GM12878 (cell line): ENCODE measurements at regions of chr3 and their contacts with region 1.

Region 1: DNA sequence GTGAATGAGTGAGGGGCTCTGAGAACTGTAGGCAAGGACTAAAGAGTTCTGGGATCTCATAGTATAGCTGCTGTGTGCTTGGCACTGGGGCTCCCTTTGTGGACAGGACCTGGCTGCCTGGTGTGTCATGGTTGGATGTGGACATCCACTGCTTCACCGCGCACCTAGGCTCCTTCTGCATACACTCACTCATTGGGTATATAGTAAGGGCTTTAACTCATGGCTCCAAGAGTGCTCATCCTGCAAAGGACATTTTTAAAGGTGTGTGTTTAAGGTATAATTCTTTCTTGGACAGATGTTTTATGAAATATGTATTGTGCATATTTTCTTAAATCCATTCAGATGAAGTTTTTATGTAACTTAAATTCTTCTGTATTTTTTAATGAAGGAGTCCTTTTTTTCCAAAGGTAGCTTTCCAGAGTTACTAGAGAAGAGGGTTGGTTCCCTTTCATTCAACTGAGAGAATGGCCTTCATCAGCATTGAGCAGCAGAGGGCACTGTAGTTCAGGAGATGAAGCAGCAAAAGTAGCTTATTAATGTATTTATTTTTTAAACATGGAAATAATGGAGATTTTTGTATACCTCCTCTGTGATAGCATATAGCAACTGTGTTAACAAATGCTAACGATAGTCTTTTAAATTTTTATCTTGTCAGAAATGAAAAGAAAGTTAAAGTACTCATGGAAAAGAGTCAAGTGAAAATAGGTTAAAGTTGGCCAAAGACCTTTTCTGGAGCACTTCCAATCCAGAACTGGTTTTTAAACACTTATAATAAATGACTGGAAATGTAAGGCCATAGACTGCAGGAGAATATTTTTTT is 25.2 kb downstream of the OXNAD1 start:
- DNase-seq: no peak
- ATAC-seq: peak; percentile 58
- H3K4me3 ChIP-seq: no peak overlapping the region
- H3K27ac ChIP-seq: peak overlapping the region; percentile 5; the same call in 1 of the 2 replicates
- H3K4me1 ChIP-seq: peaks cover 11% of the 10 kb centered on the region
- H3K27me3 ChIP-seq: no peaks in the 10 kb centered on the region
- CTCF ChIP-seq: peak; percentile 64 to 89 (median 81)
- EP300 ChIP-seq: no peak
- POLR2A ChIP-seq: no peak
- RAD21 ChIP-seq: peak; percentile 96

Region 2: GRCh38 chr3:16211176-16211904 is 78.9 kb before region 1 on chr3:
- CTCF ChIA-PET with region 1: no interaction called
- POLR2A ChIA-PET with region 1: no interaction called
- RAD21 ChIA-PET with region 1: no interaction called
- SMC1A ChIA-PET with region 1: no interaction called
- in situ Hi-C with region 1: no loop called
- intact Hi-C with region 1: no loop called
- DNase-seq: no peak
- ATAC-seq: no peak
- H3K4me3 ChIP-seq: no peak overlapping the region
- H3K27ac ChIP-seq: no peak overlapping the region
- H3K4me1 ChIP-seq: no peaks in the 10 kb centered on the region
- H3K27me3 ChIP-seq: no peaks in the 10 kb centered on the region; a peak in 1 of 4 replicates
- CTCF ChIP-seq: no peak
- EP300 ChIP-seq: no peak
- POLR2A ChIP-seq: no peak
- RAD21 ChIP-seq: no peak

Region 3: GRCh38 chr3:16300881-16301359 is 10.7 kb after region 1 on chr3:
- CTCF ChIA-PET with region 1: interaction called, 45 read pairs
- POLR2A ChIA-PET with region 1: interaction called, 5 read pairs
- RAD21 ChIA-PET with region 1: interaction called, 26 read pairs
- SMC1A ChIA-PET with region 1: interaction called, 13 read pairs
- in situ Hi-C with region 1: no loop called
- intact Hi-C with region 1: no loop called
- DNase-seq: peak; percentile 48
- ATAC-seq: peak; percentile 75
- H3K4me3 ChIP-seq: no peak overlapping the region
- H3K27ac ChIP-seq: peak overlapping the region; percentile 33
- H3K4me1 ChIP-seq: peaks cover 20% of the 10 kb centered on the region
- H3K27me3 ChIP-seq: no peaks in the 10 kb centered on the region
- CTCF ChIP-seq: no peak
- EP300 ChIP-seq: no peak
- POLR2A ChIP-seq: no peak
- RAD21 ChIP-seq: no peak

Region 4: DNA sequence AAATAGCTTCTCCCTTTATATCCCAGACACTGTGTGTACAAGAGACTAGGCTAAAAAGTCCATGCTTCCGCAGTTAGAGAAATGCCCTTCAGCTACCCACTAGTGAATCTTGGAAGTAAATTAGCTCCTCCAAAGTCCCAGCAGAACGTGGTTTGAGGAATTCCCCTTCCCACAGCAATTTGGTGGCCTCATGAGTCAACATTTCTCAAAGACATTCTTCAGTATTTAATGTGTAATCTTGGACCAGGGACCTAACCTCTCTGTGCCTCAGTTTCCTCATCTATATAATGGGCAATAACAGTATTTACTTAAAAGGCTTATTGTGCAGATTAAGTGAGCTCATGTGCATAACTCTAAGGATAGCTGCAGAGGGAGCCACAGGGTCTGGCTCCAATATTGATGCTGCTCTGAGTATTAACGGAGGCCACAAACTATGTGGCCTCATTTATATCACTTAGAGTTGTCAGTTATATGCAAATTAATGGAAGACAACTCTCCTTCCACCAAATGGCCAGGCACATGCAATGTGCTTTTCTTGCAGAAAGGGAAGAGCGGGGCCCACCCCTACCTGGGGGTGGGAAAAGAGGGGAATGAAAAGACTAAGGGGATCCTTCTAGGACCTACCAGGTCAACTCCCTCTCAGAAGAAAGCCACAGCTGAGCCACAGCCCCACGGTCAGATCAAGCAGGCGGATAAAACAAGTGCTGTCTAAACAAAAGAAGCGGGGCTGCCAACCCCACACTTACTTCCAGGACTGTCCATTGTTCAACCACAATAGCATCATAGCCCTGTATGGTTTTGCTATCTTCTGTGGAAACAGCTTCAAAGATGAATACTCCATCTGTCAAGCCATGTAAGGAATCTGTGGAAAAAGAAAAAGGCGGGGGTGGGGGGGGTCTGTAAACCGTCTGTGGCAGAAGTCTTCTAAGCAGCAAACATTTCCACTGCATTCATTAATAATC is 67.2 kb after region 1 on chr3:
- CTCF ChIA-PET with region 1: interaction called, 11 read pairs
- POLR2A ChIA-PET with region 1: no interaction called
- RAD21 ChIA-PET with region 1: interaction called, 3 read pairs
- SMC1A ChIA-PET with region 1: interaction called, 3 read pairs
- in situ Hi-C with region 1: no loop called
- intact Hi-C with region 1: no loop called
- DNase-seq: no peak
- ATAC-seq: no peak
- H3K4me3 ChIP-seq: no peak overlapping the region
- H3K27ac ChIP-seq: no peak overlapping the region
- H3K4me1 ChIP-seq: peaks cover 9% of the 10 kb centered on the region; the same call in 1 of the 2 replicates
- H3K27me3 ChIP-seq: no peaks in the 10 kb centered on the region
- CTCF ChIP-seq: no peak
- EP300 ChIP-seq: no peak
- POLR2A ChIP-seq: no peak
- RAD21 ChIP-seq: 0 out of 2 replicates have a peak, but pooled peaks have one; percentile 4

Region 5: GRCh38 chr3:16516695-16517481 is 226.7 kb after region 1 on chr3:
- CTCF ChIA-PET with region 1: interaction called, 13 read pairs
- POLR2A ChIA-PET with region 1: interaction called, 3 read pairs
- RAD21 ChIA-PET with region 1: interaction called, 37 read pairs
- SMC1A ChIA-PET with region 1: interaction called, 23 read pairs
- in situ Hi-C with region 1: no loop called
- intact Hi-C with region 1: no loop called
- DNase-seq: no peak
- ATAC-seq: peak; percentile 24
- H3K4me3 ChIP-seq: peak overlapping the region; percentile 86
- H3K27ac ChIP-seq: peak overlapping the region; percentile 92
- H3K4me1 ChIP-seq: peaks cover 52% of the 10 kb centered on the region
- H3K27me3 ChIP-seq: no peaks in the 10 kb centered on the region
- CTCF ChIP-seq: peak in 1 of 3 experiments; percentile 16; a peak in 1 of 6 replicates
- EP300 ChIP-seq: peak; percentile 22 to 25; a peak in 2 of 4 replicates
- POLR2A ChIP-seq: peak; percentile 40; the same call in 1 of the 2 replicates
- RAD21 ChIP-seq: no peak

Region 6: DNA sequence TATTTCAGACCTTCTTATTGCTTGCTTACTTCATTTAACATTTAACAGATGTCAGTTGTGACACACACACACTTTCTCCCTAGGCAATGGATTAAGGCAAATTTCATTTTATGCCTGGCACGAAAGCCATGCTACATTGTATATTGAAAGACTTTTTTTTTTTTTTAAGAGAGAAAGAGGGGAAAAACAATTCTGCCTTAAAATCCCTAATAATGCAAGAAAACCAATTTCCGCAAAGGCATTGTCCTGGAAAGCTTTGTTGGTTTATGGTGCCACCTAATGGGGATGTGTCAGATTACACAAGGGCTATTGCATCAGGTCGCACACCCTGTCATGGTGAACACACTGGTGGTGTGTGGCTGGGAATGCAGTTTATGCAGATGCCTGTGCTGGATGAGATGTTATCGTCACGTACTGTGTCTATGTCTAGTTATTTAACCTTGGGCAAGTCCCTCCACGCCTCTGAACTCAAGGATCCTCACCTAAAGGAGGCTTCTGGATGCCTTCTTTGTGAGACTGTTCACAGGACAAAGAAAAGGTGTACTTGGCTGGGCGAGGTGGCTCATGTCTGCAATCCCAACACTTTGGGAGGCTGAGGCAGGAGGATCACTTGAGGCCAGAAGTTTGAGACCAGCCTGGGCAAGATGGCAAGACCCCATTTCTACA is 260.6 kb after region 1 on chr3:
- CTCF ChIA-PET with region 1: interaction called, 170 read pairs
- POLR2A ChIA-PET with region 1: interaction called, 4 read pairs
- RAD21 ChIA-PET with region 1: interaction called, 91 read pairs
- SMC1A ChIA-PET with region 1: interaction called, 67 read pairs
- in situ Hi-C with region 1: loop called (anchors 5 kb)
- intact Hi-C with region 1: loop called (anchors 1 kb)
- DNase-seq: peak; percentile 81
- ATAC-seq: peak; percentile 98
- H3K4me3 ChIP-seq: no peak overlapping the region
- H3K27ac ChIP-seq: 0 out of 2 replicates have a peak overlapping the region, but pooled peaks have one; percentile 9
- H3K4me1 ChIP-seq: peaks cover 13% of the 10 kb centered on the region
- H3K27me3 ChIP-seq: no peaks in the 10 kb centered on the region
- CTCF ChIP-seq: peak; percentile 83 to 94 (median 90)
- EP300 ChIP-seq: no peak
- POLR2A ChIP-seq: peak; percentile 25; the same call in 1 of the 2 replicates
- RAD21 ChIP-seq: peak; percentile 100

Region 7: DNA sequence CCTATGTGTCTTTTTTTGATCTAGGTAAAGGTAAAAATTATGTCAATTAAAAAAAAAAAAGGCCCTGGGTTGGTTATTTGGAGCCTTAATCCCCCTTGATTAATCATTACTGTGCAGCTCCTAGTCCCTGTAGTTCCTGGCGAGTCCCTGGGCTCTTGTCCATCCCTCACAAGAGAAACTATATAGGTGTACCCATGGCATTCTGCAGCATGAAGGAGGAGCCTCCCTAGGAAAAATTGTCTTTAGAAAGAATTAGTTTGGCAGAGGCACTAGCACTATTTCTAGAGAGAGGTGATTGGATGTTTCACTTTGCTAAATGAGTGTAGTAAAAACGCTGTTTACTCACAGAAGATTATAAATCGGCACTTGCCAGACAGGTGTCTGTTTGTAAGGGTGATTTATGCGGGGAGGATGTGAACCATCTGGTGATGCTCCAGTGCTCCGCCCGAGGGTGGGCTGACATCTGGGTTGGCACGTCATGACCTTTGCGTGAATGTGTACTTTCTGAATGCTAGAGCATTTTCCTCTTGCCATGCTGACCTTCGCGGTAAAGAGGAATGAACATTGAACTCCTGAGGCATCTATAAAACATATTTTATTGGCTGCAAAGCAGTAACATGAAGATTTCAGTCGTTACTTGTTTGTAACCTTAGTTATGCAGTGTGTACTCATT is 607.2 kb after region 1 on chr3:
- CTCF ChIA-PET with region 1: no interaction called
- POLR2A ChIA-PET with region 1: no interaction called
- RAD21 ChIA-PET with region 1: no interaction called
- SMC1A ChIA-PET with region 1: no interaction called
- in situ Hi-C with region 1: loop called (anchors 10 kb)
- intact Hi-C with region 1: no loop called
- DNase-seq: peak; percentile 52
- ATAC-seq: peak; percentile 79
- H3K4me3 ChIP-seq: peak overlapping the region; percentile 47; the same call in 1 of the 2 replicates
- H3K27ac ChIP-seq: peak overlapping the region; percentile 79
- H3K4me1 ChIP-seq: peaks cover 26% of the 10 kb centered on the region
- H3K27me3 ChIP-seq: no peaks in the 10 kb centered on the region
- CTCF ChIP-seq: no peak
- EP300 ChIP-seq: peak in 1 of 2 experiments; percentile 47; a peak in 1 of 4 replicates
- POLR2A ChIP-seq: no peak
- RAD21 ChIP-seq: no peak